Mammary epithelial cell (primary cell): ENCODE measurements at regions of chr6 and their contacts with region 1.

Region 1: DNA sequence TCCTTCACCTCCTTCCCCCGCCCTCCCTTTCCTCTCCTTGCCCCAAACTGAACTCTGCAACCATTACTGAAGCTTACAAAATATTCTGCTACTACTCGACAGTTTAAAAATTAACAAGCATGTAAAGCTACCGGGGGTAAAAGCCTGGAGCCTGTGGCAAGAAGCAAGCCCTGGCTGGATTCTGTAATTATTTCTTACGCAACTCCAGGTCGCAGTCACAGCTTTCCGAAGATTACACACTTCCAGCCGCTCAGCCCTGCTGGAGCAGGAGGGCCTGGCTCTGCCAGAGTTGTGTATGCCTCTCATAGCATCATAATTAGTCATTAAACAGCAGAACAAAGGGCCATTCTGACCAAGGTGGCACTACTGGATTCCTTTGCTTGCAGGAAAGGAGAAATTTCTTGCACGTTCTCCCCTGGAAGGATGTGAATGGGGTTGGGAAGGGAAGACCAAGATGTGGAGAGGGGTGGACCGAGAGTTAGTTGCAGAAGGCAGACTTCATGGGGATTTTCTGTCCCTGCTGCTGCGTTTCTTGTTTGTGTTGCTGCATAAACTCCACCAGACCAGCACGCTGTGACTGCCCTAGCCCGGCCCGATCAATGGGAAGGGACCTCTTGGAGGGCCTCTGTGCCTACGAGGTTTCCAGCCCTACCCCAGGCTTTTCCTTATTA is 23.6 kb downstream of the FOXQ1 start:
- DNase-seq: peak; percentile 97
- H3K4me3 ChIP-seq: no peak overlapping the region
- H3K27ac ChIP-seq: peak overlapping the region; percentile 79
- H3K4me1 ChIP-seq: peaks cover 18% of the 10 kb centered on the region
- H3K27me3 ChIP-seq: no peaks in the 10 kb centered on the region
- CTCF ChIP-seq: peak in 1 of 2 donors; percentile 1

Region 2: DNA sequence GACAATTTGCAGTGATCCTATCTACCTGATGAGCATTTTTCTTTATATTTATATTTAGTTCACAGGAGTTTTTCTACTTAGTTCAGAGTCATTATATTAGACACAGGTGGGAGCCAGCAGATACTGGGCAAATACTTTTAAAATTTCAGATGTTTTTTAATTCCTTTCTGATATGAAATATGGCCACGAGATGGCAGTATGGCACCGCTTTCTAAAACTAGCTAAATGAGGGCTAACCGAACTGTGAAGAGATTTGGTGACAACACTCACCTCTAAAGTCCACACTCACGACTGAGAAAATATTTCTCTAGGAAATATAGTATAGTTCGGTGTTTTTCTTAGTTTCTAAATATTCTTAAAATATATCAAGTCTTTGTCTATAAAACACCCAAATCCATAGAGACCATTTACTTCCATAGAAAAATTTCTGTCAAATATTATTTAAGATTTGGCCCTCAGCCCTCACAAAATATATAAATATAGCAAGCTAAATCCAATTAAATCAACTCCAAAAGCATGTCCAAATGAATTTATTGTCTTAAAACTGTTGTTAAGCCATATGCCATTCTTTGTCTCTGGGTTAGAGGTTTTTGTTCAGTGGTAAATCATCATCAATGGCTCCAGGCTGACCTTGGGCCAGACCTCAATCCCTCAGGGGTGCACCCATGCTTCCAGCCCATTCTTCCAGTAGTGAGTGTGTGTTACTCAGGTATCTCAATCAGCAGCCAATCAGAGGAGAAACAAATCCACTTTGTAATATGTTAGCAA is 742.2 kb before region 1 on chr6:
- CTCF ChIA-PET with region 1: no interaction called
- dilution Hi-C with region 1: no loop called
- in situ Hi-C with region 1: loop called in 1 of 2 experiments (anchors 25 kb)
- intact Hi-C with region 1: loop called (anchors 1 kb)
- DNase-seq: peak; percentile 26
- H3K4me3 ChIP-seq: no peak overlapping the region
- H3K27ac ChIP-seq: no peak overlapping the region
- H3K4me1 ChIP-seq: no peaks in the 10 kb centered on the region
- H3K27me3 ChIP-seq: no peaks in the 10 kb centered on the region
- CTCF ChIP-seq: peak; percentile 51 to 65

Region 3: DNA sequence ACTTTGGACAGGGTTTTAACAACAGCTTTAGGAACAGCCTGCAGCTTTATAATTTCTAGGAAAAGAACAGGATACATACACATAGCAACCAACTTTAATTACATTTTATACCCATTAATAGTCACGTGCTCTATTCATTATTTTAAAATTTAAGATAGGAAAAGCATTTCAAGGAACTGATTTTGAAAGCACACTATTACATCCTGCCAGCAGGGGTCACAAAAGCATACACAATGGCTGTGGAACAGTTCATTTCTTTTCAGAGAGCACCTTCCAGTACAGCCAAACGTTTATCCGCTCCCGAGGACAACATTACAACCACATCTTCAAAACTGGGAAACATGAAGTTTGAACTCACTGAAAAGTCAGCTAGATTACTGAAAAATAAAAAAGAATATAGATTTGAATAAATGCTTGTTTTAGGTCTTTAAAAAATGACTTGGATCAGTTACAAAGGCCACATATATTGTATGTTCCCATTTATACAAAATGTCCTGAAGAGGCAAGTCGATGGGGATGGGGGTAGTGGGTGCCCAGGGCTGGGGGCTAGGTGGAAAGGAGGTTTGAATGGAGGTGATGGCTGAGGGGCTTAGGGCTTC is 537.9 kb before region 1 on chr6:
- CTCF ChIA-PET with region 1: no interaction called
- dilution Hi-C with region 1: no loop called
- in situ Hi-C with region 1: loop called (anchors 5 to 10 kb)
- intact Hi-C with region 1: loop called (anchors 1 kb)
- DNase-seq: peak; percentile 40
- H3K4me3 ChIP-seq: no peak overlapping the region
- H3K27ac ChIP-seq: no peak overlapping the region
- H3K4me1 ChIP-seq: no peaks in the 10 kb centered on the region
- H3K27me3 ChIP-seq: peaks cover 7% of the 10 kb centered on the region
- CTCF ChIP-seq: peak; percentile 62 to 76

Region 4: DNA sequence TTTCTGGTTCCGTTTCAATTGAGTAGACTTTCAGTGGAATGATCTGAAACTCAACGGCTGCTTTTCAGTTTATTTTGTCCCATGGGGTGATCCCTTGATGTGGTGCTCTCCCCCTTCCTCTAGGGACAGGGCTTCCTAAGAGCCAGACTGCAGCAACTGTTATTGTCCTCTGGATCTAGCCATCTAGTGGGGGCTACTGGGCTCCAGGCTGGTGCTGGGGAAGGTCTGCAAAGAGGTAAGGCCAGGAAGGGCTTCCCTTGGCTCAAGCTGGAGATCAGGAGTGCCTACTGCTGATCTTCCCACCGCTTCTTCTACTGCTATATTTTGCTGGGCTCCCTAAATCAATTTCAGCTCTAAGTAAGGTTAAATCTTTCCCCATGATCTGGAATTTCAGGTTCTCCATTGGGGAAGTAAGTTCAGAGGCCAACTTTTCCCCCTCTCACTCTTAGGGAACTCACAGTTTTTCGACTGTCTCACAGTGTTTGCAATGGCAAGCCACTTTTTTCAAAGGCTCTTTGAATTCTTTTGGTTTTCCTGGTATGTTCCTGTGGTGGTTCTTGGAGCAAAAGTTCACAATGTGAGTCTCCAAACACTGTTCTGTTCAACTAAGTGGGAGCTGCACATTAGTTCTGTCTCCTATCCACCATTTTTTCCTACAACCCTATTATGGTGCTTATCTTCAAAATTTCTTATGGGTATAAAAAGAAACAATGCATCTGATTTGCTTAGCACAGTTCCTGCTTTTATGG is 356.4 kb before region 1 on chr6:
- CTCF ChIA-PET with region 1: no interaction called
- dilution Hi-C with region 1: no loop called
- in situ Hi-C with region 1: no loop called
- intact Hi-C with region 1: no loop called
- DNase-seq: no peak
- H3K4me3 ChIP-seq: no peak overlapping the region
- H3K27ac ChIP-seq: no peak overlapping the region
- H3K4me1 ChIP-seq: no peaks in the 10 kb centered on the region
- H3K27me3 ChIP-seq: peaks cover 3% of the 10 kb centered on the region
- CTCF ChIP-seq: no peak

Region 5: DNA sequence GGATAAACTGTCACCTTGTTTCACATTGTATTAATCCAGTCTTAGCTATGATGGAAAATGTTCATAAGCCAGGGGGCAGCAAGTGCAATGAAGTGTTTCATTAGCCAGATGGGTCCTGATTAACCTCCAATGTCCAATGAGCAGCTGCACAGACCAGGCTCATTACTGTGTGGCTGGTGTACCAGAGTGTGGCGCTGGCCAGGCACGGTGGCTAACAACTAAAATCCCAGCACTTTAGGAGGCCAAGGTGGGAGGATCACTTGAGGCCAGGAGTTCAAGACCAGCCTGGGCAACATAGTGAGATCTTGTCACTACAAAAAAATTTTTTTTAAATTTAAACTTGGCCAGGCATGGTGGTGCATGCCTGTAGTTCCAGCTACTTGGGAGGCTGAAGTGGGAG is 225.3 kb before region 1 on chr6:
- CTCF ChIA-PET with region 1: no interaction called
- dilution Hi-C with region 1: no loop called
- in situ Hi-C with region 1: no loop called
- intact Hi-C with region 1: loop called (anchors 2 kb)
- DNase-seq: no peak
- H3K4me3 ChIP-seq: no peak overlapping the region
- H3K27ac ChIP-seq: no peak overlapping the region
- H3K4me1 ChIP-seq: peaks cover 13% of the 10 kb centered on the region
- H3K27me3 ChIP-seq: no peaks in the 10 kb centered on the region
- CTCF ChIP-seq: peak in 1 of 2 donors; percentile 24

Region 6: GRCh38 chr6:1200718-1201105 is 134.8 kb before region 1 on chr6:
- CTCF ChIA-PET with region 1: no interaction called
- dilution Hi-C with region 1: loop called (anchors 10 kb)
- in situ Hi-C with region 1: no loop called
- intact Hi-C with region 1: no loop called
- DNase-seq: no peak
- H3K4me3 ChIP-seq: no peak overlapping the region
- H3K27ac ChIP-seq: no peak overlapping the region
- H3K4me1 ChIP-seq: no peaks in the 10 kb centered on the region
- H3K27me3 ChIP-seq: peaks cover 2% of the 10 kb centered on the region
- CTCF ChIP-seq: no peak

Region 7: GRCh38 chr6:1255636-1256365 is 79.7 kb before region 1 on chr6:
- CTCF ChIA-PET with region 1: no interaction called
- dilution Hi-C with region 1: no loop called
- in situ Hi-C with region 1: no loop called
- intact Hi-C with region 1: no loop called
- DNase-seq: no peak
- H3K4me3 ChIP-seq: no peak overlapping the region
- H3K27ac ChIP-seq: no peak overlapping the region
- H3K4me1 ChIP-seq: no peaks in the 10 kb centered on the region
- H3K27me3 ChIP-seq: no peaks in the 10 kb centered on the region
- CTCF ChIP-seq: no peak

Region 8: GRCh38 chr6:1286972-1287610 is 48.4 kb before region 1 on chr6:
- CTCF ChIA-PET with region 1: no interaction called
- dilution Hi-C with region 1: no loop called
- in situ Hi-C with region 1: no loop called
- intact Hi-C with region 1: loop called (anchors 2 kb)
- DNase-seq: peak; percentile 99
- H3K4me3 ChIP-seq: peak overlapping the region in 1 of 3 experiments; percentile 10
- H3K27ac ChIP-seq: peak overlapping the region; percentile 90
- H3K4me1 ChIP-seq: peaks cover 30% of the 10 kb centered on the region
- H3K27me3 ChIP-seq: no peaks in the 10 kb centered on the region
- CTCF ChIP-seq: no peak

Region 9: GRCh38 chr6:1381481-1382330 is 46.2 kb after region 1 on chr6:
- CTCF ChIA-PET with region 1: no interaction called
- dilution Hi-C with region 1: no loop called
- in situ Hi-C with region 1: no loop called
- intact Hi-C with region 1: loop called (anchors 2 kb)
- DNase-seq: no peak
- H3K4me3 ChIP-seq: peak overlapping the region in 2 of 3 experiments; percentile 24 to 29
- H3K27ac ChIP-seq: no peak overlapping the region
- H3K4me1 ChIP-seq: peaks cover 13% of the 10 kb centered on the region
- H3K27me3 ChIP-seq: peaks cover 81% of the 10 kb centered on the region
- CTCF ChIP-seq: peak; percentile 57 to 59